Caco-2 (cell line): ENCODE measurements at regions of chr7 and their contacts with region 1.

Region 1: DNA sequence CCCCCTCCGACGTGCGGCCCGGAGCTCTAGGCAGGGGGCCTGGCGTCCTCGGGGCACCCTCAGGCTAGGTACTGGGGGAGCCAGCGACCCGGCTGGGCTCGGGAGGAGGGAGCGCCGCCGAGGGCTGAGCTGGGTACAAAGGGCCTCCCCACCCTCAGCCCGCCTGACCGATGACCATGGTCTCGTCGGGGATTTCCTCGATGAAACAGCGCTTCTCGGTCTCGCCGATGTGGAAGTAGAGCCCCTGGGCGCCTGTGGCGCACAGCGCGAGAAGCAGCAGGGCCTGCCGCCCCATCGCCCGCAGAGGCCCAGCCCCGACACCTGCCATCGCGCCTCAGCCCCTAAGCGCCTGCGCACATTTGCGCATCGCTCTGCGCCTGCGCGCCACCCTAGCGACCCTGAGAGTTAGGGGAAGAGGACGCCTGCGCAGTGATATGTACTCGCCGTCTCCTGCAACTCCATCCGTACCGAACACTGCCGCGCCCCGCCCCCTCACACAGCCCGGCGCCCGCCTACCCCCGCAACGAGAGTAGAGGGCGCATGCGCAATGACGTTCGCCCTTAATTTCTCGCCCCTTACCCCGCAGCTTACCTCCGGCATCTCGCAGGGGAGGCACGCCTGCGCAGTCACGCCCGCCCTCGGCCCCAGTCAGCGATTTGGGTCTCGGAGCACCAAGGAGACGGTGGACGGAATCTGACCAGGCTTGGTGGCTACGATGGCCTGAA is at the start of gene TMED4:
- DNase-seq: peak; percentile 99 to 100
- H3K4me3 ChIP-seq: peak within 1 kb of the TSS; percentile 80
- H3K4me3 Mint-ChIP-seq: peak within 1 kb of the TSS; percentile 86
- H3K27ac Mint-ChIP-seq: peak within 1 kb of the TSS; percentile 96
- H3K4me1 ChIP-seq: peaks cover 13% of the 10 kb centered on the region
- H3K4me1 Mint-ChIP-seq: peaks cover 7% of the 10 kb centered on the region
- H3K27me3 ChIP-seq: no peaks in the 10 kb centered on the region
- H3K27me3 Mint-ChIP-seq: no peaks in the 10 kb centered on the region
- CTCF ChIP-seq: no peak
- total RNA-seq, gene TMED4: 93.4 and 96.6 TPM in 2 replicates

Region 2: DNA sequence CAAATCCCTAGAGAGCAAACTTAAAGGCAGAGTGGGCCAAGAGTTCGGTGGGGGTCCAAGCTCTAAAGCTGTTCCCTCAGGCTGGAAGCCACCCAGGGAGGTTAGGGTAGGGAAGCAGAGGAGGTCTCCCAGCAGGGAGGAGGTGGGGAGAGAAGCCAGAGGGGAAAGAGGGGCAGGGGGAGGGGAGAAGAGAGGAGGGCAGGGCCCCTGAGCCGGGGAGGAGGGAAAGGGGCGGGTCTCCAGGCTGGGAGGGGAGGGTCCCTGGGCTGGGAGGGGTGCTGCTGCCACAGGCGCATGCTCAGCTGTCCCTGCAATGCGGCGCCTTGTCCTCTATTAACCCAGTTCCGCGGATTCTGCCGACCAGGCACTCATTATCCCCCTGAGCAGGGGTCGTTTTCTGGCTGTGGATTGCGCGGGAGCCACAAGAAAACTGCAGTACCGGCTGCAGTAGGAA is 306.1 kb before region 1 on chr7:
- CTCF ChIA-PET with region 1: no interaction called
- POLR2A ChIA-PET with region 1: no interaction called
- intact Hi-C with region 1: no loop called
- DNase-seq: peak in 1 of 2 experiments; percentile 19
- H3K4me3 ChIP-seq: no peak overlapping the region
- H3K4me3 Mint-ChIP-seq: no peak overlapping the region
- H3K27ac Mint-ChIP-seq: no peak overlapping the region
- H3K4me1 ChIP-seq: no peaks in the 10 kb centered on the region
- H3K4me1 Mint-ChIP-seq: no peaks in the 10 kb centered on the region
- H3K27me3 ChIP-seq: no peaks in the 10 kb centered on the region
- H3K27me3 Mint-ChIP-seq: no peaks in the 10 kb centered on the region
- CTCF ChIP-seq: no peak

Region 3: GRCh38 chr7:44541028-44541869 is 40.8 kb before region 1 on chr7 and contains the start of gene NPC1L1:
- CTCF ChIA-PET with region 1: no interaction called
- POLR2A ChIA-PET with region 1: no interaction called
- intact Hi-C with region 1: no loop called
- DNase-seq: peak; percentile 62 to 77
- H3K4me3 ChIP-seq: peak within 1 kb of the TSS; percentile 21
- H3K4me3 Mint-ChIP-seq: no peak within 1 kb of the TSS
- H3K27ac Mint-ChIP-seq: peak within 1 kb of the TSS; percentile 66
- H3K4me1 ChIP-seq: peaks cover 31% of the 10 kb centered on the region
- H3K4me1 Mint-ChIP-seq: peaks cover 27% of the 10 kb centered on the region
- H3K27me3 ChIP-seq: no peaks in the 10 kb centered on the region
- H3K27me3 Mint-ChIP-seq: no peaks in the 10 kb centered on the region
- CTCF ChIP-seq: no peak
- total RNA-seq, gene NPC1L1: 5.9 and 6.5 TPM in 2 replicates

Region 4: GRCh38 chr7:44599222-44599621 is 17.2 kb after region 1 on chr7:
- CTCF ChIA-PET with region 1: no interaction called
- POLR2A ChIA-PET with region 1: no interaction called
- intact Hi-C with region 1: no loop called
- DNase-seq: no peak
- H3K4me3 ChIP-seq: no peak overlapping the region
- H3K4me3 Mint-ChIP-seq: no peak overlapping the region
- H3K27ac Mint-ChIP-seq: no peak overlapping the region
- H3K4me1 ChIP-seq: no peaks in the 10 kb centered on the region
- H3K4me1 Mint-ChIP-seq: no peaks in the 10 kb centered on the region
- H3K27me3 ChIP-seq: no peaks in the 10 kb centered on the region
- H3K27me3 Mint-ChIP-seq: no peaks in the 10 kb centered on the region
- CTCF ChIP-seq: no peak

Region 5: DNA sequence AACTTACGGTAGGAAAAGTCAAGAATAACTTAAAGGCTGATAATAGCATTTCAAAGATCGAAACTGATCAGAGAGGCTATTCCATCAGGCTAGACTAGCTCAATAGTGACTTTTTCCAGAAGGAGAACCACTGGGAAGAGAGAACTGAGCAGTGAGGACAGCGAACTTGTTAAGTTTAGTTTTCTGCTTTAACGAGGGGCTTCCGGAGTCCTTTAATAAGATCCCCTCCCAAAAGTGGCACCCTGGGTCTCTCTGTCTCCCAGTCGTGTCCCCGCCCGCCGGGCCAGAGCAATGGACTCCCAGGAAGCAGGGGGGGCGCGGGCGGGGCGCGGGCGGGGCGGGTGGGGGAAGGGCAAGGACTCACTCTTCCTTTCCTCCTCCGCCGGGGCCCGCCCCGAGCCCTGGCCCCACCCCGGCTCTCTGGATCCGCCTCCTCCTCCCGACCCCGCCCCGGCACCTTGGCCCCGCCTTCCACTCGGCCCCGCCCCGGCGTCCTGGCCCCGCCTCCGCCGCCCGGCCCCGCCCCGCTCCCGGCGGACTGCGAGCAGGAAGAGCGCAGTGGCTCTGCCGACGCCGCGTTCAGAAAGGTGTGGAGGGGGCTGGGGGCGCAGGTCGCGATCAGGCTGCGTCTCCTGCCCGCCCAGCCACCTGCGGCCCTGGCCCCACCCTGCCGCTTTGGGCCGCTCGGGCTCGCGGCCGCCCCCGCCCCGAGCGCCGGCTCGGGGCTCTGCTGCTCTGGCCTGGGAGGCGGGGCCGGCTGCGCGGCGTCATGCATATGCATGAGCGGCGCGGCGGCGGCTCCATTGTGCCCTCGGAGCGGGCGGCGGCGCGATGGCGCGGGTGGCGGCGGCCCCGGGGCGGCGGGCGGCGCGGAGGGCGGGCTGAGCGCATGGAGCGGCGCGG is 166.3 kb after region 1 on chr7 and contains the start of gene ZMIZ2:
- CTCF ChIA-PET with region 1: no interaction called
- POLR2A ChIA-PET with region 1: interaction called, 13 read pairs
- intact Hi-C with region 1: loop called (anchors 5 kb)
- DNase-seq: peak; percentile 92 to 96
- H3K4me3 ChIP-seq: peak within 1 kb of the TSS; percentile 96
- H3K4me3 Mint-ChIP-seq: peak within 1 kb of the TSS; percentile 83
- H3K27ac Mint-ChIP-seq: peak within 1 kb of the TSS; percentile 72
- H3K4me1 ChIP-seq: peaks cover 24% of the 10 kb centered on the region
- H3K4me1 Mint-ChIP-seq: peaks cover 18% of the 10 kb centered on the region
- H3K27me3 ChIP-seq: no peaks in the 10 kb centered on the region
- H3K27me3 Mint-ChIP-seq: no peaks in the 10 kb centered on the region
- CTCF ChIP-seq: no peak
- total RNA-seq, gene ZMIZ2: 69.0 and 72.1 TPM in 2 replicates